Activated B cell treated with CpG ODN at 0.5 μM for 24 hours (primary cell): ENCODE measurements at regions of chr9 and their contacts with region 1.

Region 1: GRCh38 chr9:83583151-83584014 is 39.6 kb upstream of the IDNK start:
- DNase-seq: no peak
- ATAC-seq: peak; percentile 42
- H3K4me3 Mint-ChIP-seq: no peak overlapping the region
- H3K27ac Mint-ChIP-seq: no peak overlapping the region
- H3K4me1 Mint-ChIP-seq: no peaks in the 10 kb centered on the region
- H3K27me3 Mint-ChIP-seq: no peaks in the 10 kb centered on the region
- CTCF ChIP-seq: no peak

Region 2: DNA sequence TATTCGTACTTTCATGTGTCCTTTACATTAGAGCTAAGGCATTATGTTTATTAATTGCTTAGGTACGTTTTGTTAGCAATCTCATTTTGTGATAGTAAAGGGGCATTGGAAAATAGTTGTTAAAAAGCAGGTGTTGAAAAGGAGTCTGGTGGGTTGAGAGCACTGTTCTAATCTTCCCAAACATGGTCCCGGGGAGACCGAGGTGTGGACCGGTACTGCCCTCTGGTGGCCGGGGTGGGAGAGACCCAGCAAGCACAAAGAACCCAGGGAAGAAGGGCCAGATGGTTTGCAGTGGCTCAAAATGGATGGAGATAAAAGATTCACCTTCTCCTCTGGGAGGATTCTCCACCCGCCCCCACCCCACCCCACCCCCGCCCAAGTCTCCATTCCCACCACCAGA is 65.7 kb after region 1 on chr9:
- CTCF ChIA-PET with region 1: no interaction called
- POLR2A ChIA-PET with region 1: no interaction called
- intact Hi-C with region 1: loop called (anchors 1 kb)
- DNase-seq: peak; percentile 61
- ATAC-seq: peak; percentile 89
- H3K4me3 Mint-ChIP-seq: no peak overlapping the region
- H3K27ac Mint-ChIP-seq: no peak overlapping the region
- H3K4me1 Mint-ChIP-seq: peaks cover 6% of the 10 kb centered on the region
- H3K27me3 Mint-ChIP-seq: no peaks in the 10 kb centered on the region
- CTCF ChIP-seq: no peak

Region 3: DNA sequence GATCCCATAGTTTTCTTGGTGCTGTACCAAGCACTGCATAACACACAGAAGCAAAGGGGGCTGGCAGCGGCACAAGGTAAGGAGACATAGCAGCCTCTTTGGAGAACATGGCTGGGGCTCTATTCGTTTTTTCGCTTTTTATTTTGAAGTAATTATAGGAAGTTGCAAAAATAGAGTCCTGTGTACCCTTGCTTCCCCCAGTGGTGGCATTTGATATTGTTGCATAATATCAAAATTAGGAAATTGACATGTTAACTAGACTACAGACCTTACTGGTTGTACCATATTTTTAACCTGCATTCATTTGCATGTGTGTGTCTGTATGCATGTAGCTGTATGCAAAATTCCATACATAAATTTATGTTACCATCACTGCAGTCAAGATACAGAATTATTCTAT is 130.9 kb after region 1 on chr9:
- CTCF ChIA-PET with region 1: no interaction called
- POLR2A ChIA-PET with region 1: no interaction called
- intact Hi-C with region 1: loop called (anchors 1 kb)
- DNase-seq: no peak
- ATAC-seq: peak; percentile 60
- H3K4me3 Mint-ChIP-seq: no peak overlapping the region
- H3K27ac Mint-ChIP-seq: no peak overlapping the region
- H3K4me1 Mint-ChIP-seq: peaks cover 4% of the 10 kb centered on the region
- H3K27me3 Mint-ChIP-seq: no peaks in the 10 kb centered on the region
- CTCF ChIP-seq: no peak